ENCODE measurements at regions of chr1 and their contacts with region 1.

Region 1: GRCh38 chr1:243325305-243325890 is 69.6 kb downstream of the SDCCAG8 start:
- DNase-seq: peak; percentile 45
- H3K4me3 Mint-ChIP-seq: no peak overlapping the region
- H3K27ac Mint-ChIP-seq: no peak overlapping the region
- H3K4me1 Mint-ChIP-seq: no peaks in the 10 kb centered on the region
- H3K27me3 Mint-ChIP-seq: no peaks in the 10 kb centered on the region

Region 2: GRCh38 chr1:242017584-242018233 is 1307.7 kb before region 1 on chr1:
- CTCF ChIA-PET with region 1: no interaction called
- intact Hi-C with region 1: loop called (anchors 2 kb)
- DNase-seq: peak; percentile 43
- H3K4me3 Mint-ChIP-seq: no peak overlapping the region
- H3K27ac Mint-ChIP-seq: no peak overlapping the region
- H3K4me1 Mint-ChIP-seq: no peaks in the 10 kb centered on the region
- H3K27me3 Mint-ChIP-seq: no peaks in the 10 kb centered on the region

Region 3: GRCh38 chr1:242454262-242455045 is 870.9 kb before region 1 on chr1:
- CTCF ChIA-PET with region 1: no interaction called
- intact Hi-C with region 1: loop called (anchors 5 kb)
- DNase-seq: peak; percentile 7
- H3K4me3 Mint-ChIP-seq: no peak overlapping the region
- H3K27ac Mint-ChIP-seq: no peak overlapping the region
- H3K4me1 Mint-ChIP-seq: no peaks in the 10 kb centered on the region
- H3K27me3 Mint-ChIP-seq: peaks cover 31% of the 10 kb centered on the region

Region 4: DNA sequence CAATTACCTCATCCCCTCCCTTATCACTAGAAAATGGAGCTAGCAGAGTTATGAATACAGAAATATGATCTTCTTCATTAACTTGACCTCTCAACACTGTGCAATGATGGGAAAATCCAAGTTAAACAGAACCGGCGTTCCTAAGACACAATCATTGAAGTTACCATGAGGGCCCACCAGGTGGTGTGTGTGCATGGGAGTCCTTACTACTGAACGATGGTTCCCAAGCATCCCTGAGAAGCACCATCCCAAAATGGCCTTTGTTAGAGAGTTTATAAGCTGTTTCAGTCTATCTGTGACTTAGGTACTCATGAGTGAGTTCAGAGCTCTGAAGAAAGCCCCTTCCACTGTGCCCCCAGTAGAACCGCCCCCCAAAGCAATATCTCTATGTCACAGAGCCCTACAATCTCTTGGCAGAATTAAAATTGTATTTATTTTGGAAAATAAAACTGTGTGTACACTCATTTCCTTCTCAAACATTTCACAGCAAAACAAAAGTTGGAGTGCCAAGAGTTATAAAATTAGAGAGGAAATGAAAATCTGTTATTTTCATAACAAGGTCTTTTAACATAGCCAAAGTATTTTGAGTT is 857.7 kb before region 1 on chr1:
- CTCF ChIA-PET with region 1: no interaction called
- intact Hi-C with region 1: loop called (anchors 1 kb)
- DNase-seq: peak; percentile 42
- H3K4me3 Mint-ChIP-seq: no peak overlapping the region
- H3K27ac Mint-ChIP-seq: no peak overlapping the region
- H3K4me1 Mint-ChIP-seq: no peaks in the 10 kb centered on the region
- H3K27me3 Mint-ChIP-seq: peaks cover 7% of the 10 kb centered on the region

Region 5: DNA sequence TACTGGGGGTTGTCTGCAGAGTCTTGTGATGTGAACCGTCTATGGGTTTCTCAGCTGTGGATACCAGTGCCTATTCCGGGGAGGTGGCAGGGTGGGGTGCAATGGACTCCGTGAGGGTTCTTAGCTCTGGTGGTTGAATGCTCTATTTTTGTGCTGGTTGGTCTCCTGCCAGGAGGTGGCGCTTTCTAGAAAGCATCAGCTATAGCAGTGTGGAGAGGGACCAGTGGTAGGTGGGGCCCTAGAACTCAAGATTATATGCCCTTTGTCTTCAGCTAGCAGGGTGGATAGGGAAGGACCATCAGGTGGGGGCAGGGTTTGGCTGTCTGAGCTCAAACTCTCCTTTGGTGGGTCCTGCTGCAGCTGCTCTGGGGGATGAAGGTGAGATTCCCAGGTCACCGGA is 673.6 kb before region 1 on chr1:
- CTCF ChIA-PET with region 1: no interaction called
- intact Hi-C with region 1: loop called (anchors 10 kb)
- DNase-seq: peak; percentile 5
- H3K4me3 Mint-ChIP-seq: no peak overlapping the region
- H3K27ac Mint-ChIP-seq: no peak overlapping the region
- H3K4me1 Mint-ChIP-seq: no peaks in the 10 kb centered on the region
- H3K27me3 Mint-ChIP-seq: no peaks in the 10 kb centered on the region

Region 6: DNA sequence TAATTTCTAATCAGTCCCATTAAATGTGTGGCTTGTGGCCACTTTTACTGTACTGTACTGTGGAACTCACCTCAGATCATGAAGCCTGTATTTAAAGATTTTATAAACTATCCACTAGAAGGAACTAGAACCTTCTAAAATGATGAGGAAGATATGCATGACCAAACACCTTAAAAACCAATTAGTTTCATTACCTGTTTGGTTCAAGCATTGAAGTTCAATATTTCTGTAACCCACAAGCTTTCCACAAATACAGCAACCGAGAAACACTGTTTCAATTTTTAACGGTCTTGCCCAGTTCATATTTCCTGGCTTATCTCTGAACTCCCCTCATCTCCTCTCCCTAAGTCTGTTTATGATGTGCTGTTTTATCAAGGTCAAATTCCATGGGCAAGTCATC is 536.6 kb before region 1 on chr1:
- CTCF ChIA-PET with region 1: no interaction called
- intact Hi-C with region 1: loop called (anchors 5 kb)
- DNase-seq: no peak
- H3K4me3 Mint-ChIP-seq: no peak overlapping the region
- H3K27ac Mint-ChIP-seq: no peak overlapping the region
- H3K4me1 Mint-ChIP-seq: no peaks in the 10 kb centered on the region
- H3K27me3 Mint-ChIP-seq: peaks cover 13% of the 10 kb centered on the region

Region 7: GRCh38 chr1:242842094-242842493 is 483.3 kb before region 1 on chr1:
- CTCF ChIA-PET with region 1: no interaction called
- intact Hi-C with region 1: loop called (anchors 1 kb)
- DNase-seq: no peak
- H3K4me3 Mint-ChIP-seq: no peak overlapping the region
- H3K27ac Mint-ChIP-seq: no peak overlapping the region
- H3K4me1 Mint-ChIP-seq: no peaks in the 10 kb centered on the region
- H3K27me3 Mint-ChIP-seq: no peaks in the 10 kb centered on the region

Region 8: GRCh38 chr1:243378669-243379068 is 53.3 kb after region 1 on chr1:
- CTCF ChIA-PET with region 1: no interaction called
- intact Hi-C with region 1: no loop called
- DNase-seq: no peak
- H3K4me3 Mint-ChIP-seq: no peak overlapping the region
- H3K27ac Mint-ChIP-seq: no peak overlapping the region
- H3K4me1 Mint-ChIP-seq: no peaks in the 10 kb centered on the region
- H3K27me3 Mint-ChIP-seq: no peaks in the 10 kb centered on the region